Heart left ventricle (tissue), 16 donors: ENCODE measurements at regions of chr18 and their contacts with region 1.

Region 1: GRCh38 chr18:7566567-7567473 is at the start of gene PTPRM:
- DNase-seq: peak; percentile 93 to 96 (median 95)
- ATAC-seq: peak; percentile 86 to 94 (median 92)
- H3K4me3 ChIP-seq: peak within 1 kb of the TSS; percentile 59 to 99 (median 92)
- H3K27ac ChIP-seq: peak within 1 kb of the TSS; percentile 95 to 100 (median 99)
- H3K4me1 ChIP-seq: peaks cover 0 to 50% (median 36%) of the 10 kb centered on the region in 12 donors
- H3K27me3 ChIP-seq: peaks cover 0 to 32% (median 0%) of the 10 kb centered on the region in 9 donors
- CTCF ChIP-seq: peak in 8 of 12 donors; percentile 32 to 86 (median 54)
- POLR2A ChIP-seq: peak; percentile 21 to 89
- total RNA-seq, gene PTPRM: 103 to 186 (median 132) TPM

Region 2: GRCh38 chr18:7190547-7191156 is 376.2 kb before region 1 on chr18:
- intact Hi-C with region 1: no loop called
- DNase-seq: no peak
- ATAC-seq: no peak
- H3K4me3 ChIP-seq: no peak overlapping the region
- H3K27ac ChIP-seq: no peak overlapping the region
- H3K4me1 ChIP-seq: no peaks in the 10 kb centered on the region
- H3K27me3 ChIP-seq: no peaks in the 10 kb centered on the region
- CTCF ChIP-seq: no peak
- POLR2A ChIP-seq: no peak

Region 3: GRCh38 chr18:7272311-7273049 is 294.3 kb before region 1 on chr18:
- intact Hi-C with region 1: loop called (anchors 1 to 5 kb)
- DNase-seq: peak; percentile 71 to 76 (median 74)
- ATAC-seq: peak; percentile 78 to 88 (median 84)
- H3K4me3 ChIP-seq: peak overlapping the region in 9 of 12 donors; percentile 25 to 45 (median 32)
- H3K27ac ChIP-seq: peak overlapping the region; percentile 64 to 84 (median 78)
- H3K4me1 ChIP-seq: peaks cover 3 to 24% (median 19%) of the 10 kb centered on the region in 12 donors
- H3K27me3 ChIP-seq: no peaks in the 10 kb centered on the region
- CTCF ChIP-seq: peak; percentile 21 to 75 (median 58)
- POLR2A ChIP-seq: no peak

Region 4: GRCh38 chr18:7452331-7452730 is 114.5 kb before region 1 on chr18:
- intact Hi-C with region 1: loop called in 7 of 10 experiments (anchors 5 to 10 kb)
- DNase-seq: no peak
- ATAC-seq: peak; percentile 63 to 88 (median 78)
- H3K4me3 ChIP-seq: no peak overlapping the region
- H3K27ac ChIP-seq: no peak overlapping the region
- H3K4me1 ChIP-seq: peaks cover 0 to 13% (median 0%) of the 10 kb centered on the region in 12 donors
- H3K27me3 ChIP-seq: no peaks in the 10 kb centered on the region
- CTCF ChIP-seq: peak; percentile 35 to 74 (median 60)
- POLR2A ChIP-seq: no peak

Region 5: GRCh38 chr18:7512348-7512747 is 54.5 kb before region 1 on chr18:
- intact Hi-C with region 1: no loop called
- DNase-seq: no peak
- ATAC-seq: peak in 2 of 4 donors; percentile 42 to 44
- H3K4me3 ChIP-seq: no peak overlapping the region
- H3K27ac ChIP-seq: no peak overlapping the region
- H3K4me1 ChIP-seq: peaks cover 0 to 24% (median 5%) of the 10 kb centered on the region in 12 donors
- H3K27me3 ChIP-seq: no peaks in the 10 kb centered on the region
- CTCF ChIP-seq: no peak
- POLR2A ChIP-seq: no peak

Region 6: GRCh38 chr18:7608781-7609201 is 42.0 kb after region 1 on chr18:
- intact Hi-C with region 1: loop called in 2 of 10 experiments (anchors 5 kb)
- DNase-seq: peak in 3 of 5 donors; percentile 36 to 50 (median 39)
- ATAC-seq: peak; percentile 75 to 88 (median 80)
- H3K4me3 ChIP-seq: no peak overlapping the region
- H3K27ac ChIP-seq: peak overlapping the region; percentile 77 to 94 (median 87)
- H3K4me1 ChIP-seq: peaks cover 3 to 96% (median 64%) of the 10 kb centered on the region in 12 donors
- H3K27me3 ChIP-seq: no peaks in the 10 kb centered on the region
- CTCF ChIP-seq: no peak
- POLR2A ChIP-seq: no peak

Region 7: GRCh38 chr18:7980136-7980535 is 413.3 kb after region 1 on chr18:
- intact Hi-C with region 1: loop called in 1 of 10 experiments (anchors 10 kb)
- DNase-seq: no peak
- ATAC-seq: no peak
- H3K4me3 ChIP-seq: no peak overlapping the region
- H3K27ac ChIP-seq: no peak overlapping the region
- H3K4me1 ChIP-seq: peaks cover 3 to 44% (median 10%) of the 10 kb centered on the region in 12 donors
- H3K27me3 ChIP-seq: no peaks in the 10 kb centered on the region
- CTCF ChIP-seq: peak in 1 of 12 donors; percentile 20
- POLR2A ChIP-seq: no peak

Region 8: DNA sequence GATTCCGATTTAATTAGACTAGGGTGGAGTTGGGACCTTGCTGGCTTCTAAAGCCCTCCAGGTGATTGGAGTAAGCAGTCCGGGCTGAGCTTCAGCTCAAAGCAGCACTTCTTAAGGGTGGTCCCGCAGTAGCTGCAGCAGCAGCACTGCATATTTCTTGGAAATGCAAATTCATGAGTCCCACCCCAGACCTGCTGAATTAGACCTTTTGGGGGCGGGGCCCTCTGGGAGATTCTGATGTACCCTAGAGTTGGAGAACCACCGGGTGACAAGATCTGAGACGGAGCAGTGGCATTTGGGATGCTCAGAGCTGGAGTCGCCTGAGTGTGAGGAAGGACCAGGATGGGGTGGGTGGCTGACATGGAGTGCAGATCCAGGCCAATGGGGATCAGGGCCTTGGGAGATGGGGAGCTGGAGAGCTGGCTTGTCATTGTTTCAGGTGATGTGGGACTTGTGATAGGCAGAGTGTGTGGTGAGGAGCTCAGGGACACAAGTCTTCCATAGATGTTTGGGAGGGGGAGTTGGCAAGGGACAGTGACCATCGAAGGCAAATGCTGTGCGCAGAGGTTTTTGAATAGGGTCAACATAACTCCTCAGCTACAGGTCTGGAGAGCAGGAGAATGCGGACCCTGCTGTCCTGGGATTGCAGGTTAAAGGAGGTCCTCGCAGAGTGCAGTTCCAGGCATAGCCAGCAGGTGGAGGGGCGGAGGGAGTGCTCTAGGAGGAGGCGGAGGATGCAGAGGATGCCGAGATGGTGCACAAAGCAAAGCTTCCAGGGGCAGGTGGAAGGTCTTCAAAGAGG is 911.5 kb after region 1 on chr18:
- intact Hi-C with region 1: loop called in 2 of 10 experiments (anchors 5 to 10 kb)
- DNase-seq: peak; percentile 27 to 79 (median 37)
- ATAC-seq: peak; percentile 38 to 73 (median 60)
- H3K4me3 ChIP-seq: no peak overlapping the region
- H3K27ac ChIP-seq: no peak overlapping the region
- H3K4me1 ChIP-seq: peaks cover 0 to 6% (median 0%) of the 10 kb centered on the region in 12 donors
- H3K27me3 ChIP-seq: no peaks in the 10 kb centered on the region
- CTCF ChIP-seq: peak; percentile 63 to 80 (median 72)
- POLR2A ChIP-seq: no peak